ENCODE measurements at regions of chr3 and their contacts with region 1.

Region 1: DNA sequence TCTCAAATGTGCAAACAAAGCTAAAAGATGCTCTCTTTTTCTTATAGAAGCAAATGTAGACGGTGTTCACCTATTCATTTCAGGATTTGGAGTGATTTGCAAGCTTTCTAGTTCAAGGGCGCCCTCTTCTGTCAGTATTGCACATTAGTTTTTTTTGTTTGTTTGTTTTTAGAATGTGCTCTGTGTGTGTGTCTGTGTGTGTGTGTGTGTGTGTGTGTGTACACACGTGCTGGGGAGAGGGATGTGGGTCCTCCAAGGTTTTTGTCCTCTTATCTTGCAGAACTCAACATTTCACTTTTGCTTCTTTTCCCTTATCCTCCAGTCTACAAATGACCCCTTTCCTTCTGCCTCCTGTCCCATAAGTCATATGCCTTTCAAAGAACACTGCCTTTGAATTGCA is 23.5 kb downstream of the DNAH1 start:
- DNase-seq: peak; percentile 61
- ATAC-seq: peak; percentile 76
- H3K4me3 Mint-ChIP-seq: no peak overlapping the region
- H3K27ac Mint-ChIP-seq: no peak overlapping the region
- H3K4me1 Mint-ChIP-seq: peaks cover 6% of the 10 kb centered on the region
- H3K27me3 Mint-ChIP-seq: no peaks in the 10 kb centered on the region

Region 2: DNA sequence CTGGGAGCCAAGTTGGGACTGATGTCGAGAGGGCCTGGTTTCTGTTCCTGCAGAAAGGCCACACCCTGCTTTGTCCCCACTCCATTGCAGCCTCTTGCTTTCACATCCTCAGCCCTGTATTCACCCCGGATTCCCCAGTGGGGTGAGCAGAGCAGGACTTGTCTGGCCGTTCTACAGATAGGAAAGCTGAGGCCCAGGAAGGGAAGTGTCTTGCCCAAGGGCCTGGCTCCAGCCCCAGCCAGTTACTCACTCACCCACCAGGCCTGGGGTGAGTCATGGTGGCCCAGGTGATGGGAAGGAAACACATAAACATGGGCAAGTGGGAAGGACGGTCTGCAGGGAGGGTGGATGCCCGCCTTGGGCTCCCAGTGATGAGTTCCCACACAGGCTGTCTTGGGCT is 277.1 kb before region 1 on chr3:
- CTCF ChIA-PET with region 1: no interaction called
- DNase-seq: no peak
- ATAC-seq: no peak
- H3K4me3 Mint-ChIP-seq: no peak overlapping the region
- H3K27ac Mint-ChIP-seq: no peak overlapping the region
- H3K4me1 Mint-ChIP-seq: peaks cover 7% of the 10 kb centered on the region
- H3K27me3 Mint-ChIP-seq: no peaks in the 10 kb centered on the region

Region 3: GRCh38 chr3:52231502-52232293 is 107.9 kb before region 1 on chr3:
- CTCF ChIA-PET with region 1: interaction called, 89 read pairs
- DNase-seq: peak; percentile 89
- ATAC-seq: peak; percentile 87
- H3K4me3 Mint-ChIP-seq: no peak overlapping the region
- H3K27ac Mint-ChIP-seq: peak overlapping the region; percentile 57
- H3K4me1 Mint-ChIP-seq: peaks cover 42% of the 10 kb centered on the region
- H3K27me3 Mint-ChIP-seq: no peaks in the 10 kb centered on the region

Region 4: GRCh38 chr3:52270252-52270754 is 69.3 kb before region 1 on chr3:
- CTCF ChIA-PET with region 1: interaction called, 11 read pairs
- DNase-seq: no peak
- ATAC-seq: no peak
- H3K4me3 Mint-ChIP-seq: peak overlapping the region; percentile 69
- H3K27ac Mint-ChIP-seq: peak overlapping the region; percentile 85
- H3K4me1 Mint-ChIP-seq: peaks cover 84% of the 10 kb centered on the region
- H3K27me3 Mint-ChIP-seq: no peaks in the 10 kb centered on the region

Region 5: GRCh38 chr3:52291508-52292181 is 48.0 kb before region 1 on chr3:
- CTCF ChIA-PET with region 1: interaction called, 64 read pairs
- DNase-seq: peak; percentile 75
- ATAC-seq: no peak
- H3K4me3 Mint-ChIP-seq: no peak overlapping the region
- H3K27ac Mint-ChIP-seq: peak overlapping the region; percentile 76
- H3K4me1 Mint-ChIP-seq: peaks cover 35% of the 10 kb centered on the region
- H3K27me3 Mint-ChIP-seq: no peaks in the 10 kb centered on the region

Region 6: GRCh38 chr3:52388933-52389332 is 49.3 kb after region 1 on chr3:
- CTCF ChIA-PET with region 1: interaction called, 12 read pairs
- DNase-seq: no peak
- ATAC-seq: no peak
- H3K4me3 Mint-ChIP-seq: no peak overlapping the region
- H3K27ac Mint-ChIP-seq: no peak overlapping the region
- H3K4me1 Mint-ChIP-seq: peaks cover 3% of the 10 kb centered on the region
- H3K27me3 Mint-ChIP-seq: no peaks in the 10 kb centered on the region